ENCODE measurements at regions of chr3 and their contacts with region 1.

Region 1: GRCh38 chr3:104526901-104527401 is 839.8 kb upstream of the ALCAM start:
- DNase-seq: no peak
- ATAC-seq: peak; percentile 80
- H3K4me3 Mint-ChIP-seq: peak overlapping the region; percentile 70
- H3K27ac Mint-ChIP-seq: peak overlapping the region; percentile 89
- H3K4me1 Mint-ChIP-seq: peaks cover 49% of the 10 kb centered on the region
- H3K27me3 Mint-ChIP-seq: no peaks in the 10 kb centered on the region
- CTCF ChIP-seq: no peak

Region 2: GRCh38 chr3:104428337-104428925 is 98.5 kb before region 1 on chr3:
- CTCF ChIA-PET with region 1: no interaction called
- POLR2A ChIA-PET with region 1: no interaction called
- intact Hi-C with region 1: loop called (anchors 5 kb)
- DNase-seq: no peak
- ATAC-seq: peak; percentile 28
- H3K4me3 Mint-ChIP-seq: no peak overlapping the region
- H3K27ac Mint-ChIP-seq: no peak overlapping the region
- H3K4me1 Mint-ChIP-seq: peaks cover 12% of the 10 kb centered on the region
- H3K27me3 Mint-ChIP-seq: no peaks in the 10 kb centered on the region
- CTCF ChIP-seq: no peak

Region 3: GRCh38 chr3:104556372-104557078 is 29.6 kb after region 1 on chr3:
- CTCF ChIA-PET with region 1: no interaction called
- POLR2A ChIA-PET with region 1: no interaction called
- intact Hi-C with region 1: loop called (anchors 2 kb)
- DNase-seq: no peak
- ATAC-seq: peak; percentile 28
- H3K4me3 Mint-ChIP-seq: peak overlapping the region; percentile 6
- H3K27ac Mint-ChIP-seq: peak overlapping the region; percentile 10
- H3K4me1 Mint-ChIP-seq: peaks cover 37% of the 10 kb centered on the region
- H3K27me3 Mint-ChIP-seq: no peaks in the 10 kb centered on the region
- CTCF ChIP-seq: no peak